T-cell (primary cell): ENCODE measurements at regions of chr6 and their contacts with region 1.

Region 1: GRCh38 chr6:135054569-135055498 is at the start of gene HBS1L:
- DNase-seq: peak; percentile 92 to 99 (median 95)
- ATAC-seq: peak; percentile 97 to 99 (median 98)
- H3K4me3 ChIP-seq: peak within 1 kb of the TSS; percentile 87 to 100
- H3K4me3 Mint-ChIP-seq: peak within 1 kb of the TSS; percentile 92 to 100 (median 99)
- H3K27ac ChIP-seq: peak within 1 kb of the TSS; percentile 95
- H3K27ac Mint-ChIP-seq: peak within 1 kb of the TSS; percentile 89 to 98
- H3K4me1 ChIP-seq: peaks cover 19 to 23% of the 10 kb centered on the region in 2 experiments
- H3K4me1 Mint-ChIP-seq: peaks cover 40 to 45% (median 43%) of the 10 kb centered on the region in 3 donors
- H3K27me3 ChIP-seq: no peaks in the 10 kb centered on the region
- H3K27me3 Mint-ChIP-seq: no peaks in the 10 kb centered on the region
- total RNA-seq, gene HBS1L: 51.4 to 112 (median 69.7) TPM

Region 2: DNA sequence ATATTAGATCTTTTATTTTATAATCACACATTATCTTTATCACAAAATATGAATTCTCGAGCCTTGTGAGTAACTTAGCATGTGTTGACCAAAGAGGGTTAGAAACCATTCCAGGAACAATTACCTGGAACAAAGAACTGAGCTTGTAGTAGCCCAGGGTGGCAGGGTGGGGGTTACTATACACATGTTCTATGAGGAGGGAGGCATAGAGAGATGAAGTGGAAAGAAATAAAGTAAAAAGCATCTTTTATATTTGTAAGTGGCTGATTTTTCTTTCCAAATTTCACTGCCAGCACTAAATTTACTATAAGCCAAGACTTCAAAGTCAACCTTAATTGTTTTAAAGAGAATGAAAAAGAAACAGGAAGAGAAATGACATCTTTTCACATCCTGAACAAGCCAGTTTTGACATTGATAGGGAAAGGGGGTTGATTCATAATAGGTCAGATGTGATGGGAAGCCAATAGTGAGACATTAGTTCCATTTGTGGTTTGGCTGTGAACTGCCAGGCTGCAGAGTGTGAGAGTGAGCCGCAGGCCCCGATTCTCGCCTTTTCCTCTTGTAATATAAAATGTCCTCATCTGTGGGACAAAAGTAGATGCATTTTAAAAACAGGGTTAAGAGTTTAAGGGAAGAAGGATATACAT is 73.6 kb after region 1 on chr6:
- CTCF ChIA-PET with region 1: interaction called, 3 to 4 read pairs
- POLR2A ChIA-PET with region 1: interaction called in 1 of 2 experiments, 12 read pairs
- DNase-seq: peak in 32 of 35 experiments; percentile 6 to 76 (median 28)
- ATAC-seq: peak; percentile 67 to 98 (median 81)
- H3K4me3 ChIP-seq: no peak overlapping the region
- H3K4me3 Mint-ChIP-seq: peak overlapping the region; percentile 62 to 85 (median 65)
- H3K27ac ChIP-seq: peak overlapping the region; percentile 77
- H3K27ac Mint-ChIP-seq: peak overlapping the region; percentile 97
- H3K4me1 ChIP-seq: peaks cover 8 to 23% of the 10 kb centered on the region in 2 experiments
- H3K4me1 Mint-ChIP-seq: peaks cover 35 to 37% (median 36%) of the 10 kb centered on the region in 3 donors
- H3K27me3 ChIP-seq: no peaks in the 10 kb centered on the region
- H3K27me3 Mint-ChIP-seq: no peaks in the 10 kb centered on the region

Region 3: DNA sequence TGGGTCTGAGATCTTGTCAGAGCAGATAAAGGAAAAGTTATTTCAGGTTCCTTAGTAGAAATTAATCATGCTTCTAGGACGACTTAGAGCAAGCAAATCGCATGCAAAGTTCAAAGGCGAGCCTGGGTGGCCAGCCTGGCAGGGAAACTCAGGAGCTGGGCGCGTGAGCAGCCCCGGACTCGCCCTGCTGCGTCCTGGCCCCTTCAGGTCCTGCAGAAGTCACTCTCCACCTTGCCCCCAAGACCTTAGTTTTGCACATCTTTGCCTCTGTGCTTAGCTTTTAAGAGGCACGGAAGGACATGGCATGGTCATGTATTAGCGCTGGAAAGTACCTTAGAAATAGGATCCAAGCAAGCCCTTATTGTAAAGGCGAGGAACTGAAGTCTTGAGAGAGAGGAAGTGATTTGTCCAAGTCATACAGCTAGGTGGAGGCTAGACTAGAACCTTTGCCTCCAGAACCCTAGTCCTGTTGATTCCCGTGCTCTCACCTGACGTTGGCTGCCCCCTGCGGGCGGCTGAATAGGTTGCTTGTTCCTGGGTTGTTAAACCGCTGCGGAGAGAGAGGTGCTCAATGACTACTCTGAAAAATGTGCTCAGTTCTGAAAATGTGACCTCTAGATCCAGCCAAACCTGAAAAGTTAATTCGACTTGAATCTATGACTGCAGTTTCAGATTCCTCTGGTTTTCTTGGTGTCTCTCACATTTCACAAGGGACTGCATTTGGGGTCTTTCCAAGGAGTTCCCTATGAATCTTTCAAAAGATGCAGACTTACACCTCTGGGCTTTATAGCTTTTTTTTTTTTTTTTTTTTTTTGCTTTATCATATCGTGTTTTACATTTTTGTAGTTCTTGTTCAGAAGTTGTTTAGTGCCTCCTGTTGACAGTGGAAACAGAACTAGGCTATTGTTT is 129.0 kb after region 1 on chr6:
- CTCF ChIA-PET with region 1: interaction called, 3 to 7 read pairs
- POLR2A ChIA-PET with region 1: interaction called, 4 to 10 read pairs
- DNase-seq: peak; percentile 59 to 84 (median 71)
- ATAC-seq: peak; percentile 45 to 55 (median 48)
- H3K4me3 ChIP-seq: peak overlapping the region; percentile 63 to 98
- H3K4me3 Mint-ChIP-seq: peak overlapping the region; percentile 83 to 94 (median 87)
- H3K27ac ChIP-seq: peak overlapping the region; percentile 5
- H3K27ac Mint-ChIP-seq: peak overlapping the region; percentile 74 to 81
- H3K4me1 ChIP-seq: peaks cover 12 to 21% of the 10 kb centered on the region in 2 experiments
- H3K4me1 Mint-ChIP-seq: peaks cover 17 to 29% (median 25%) of the 10 kb centered on the region in 3 donors
- H3K27me3 ChIP-seq: no peaks in the 10 kb centered on the region
- H3K27me3 Mint-ChIP-seq: no peaks in the 10 kb centered on the region